Naive thymus-derived CD4-positive, alpha-beta T cell (primary cell): ENCODE measurements at regions of chr7 and their contacts with region 1.

Region 1: DNA sequence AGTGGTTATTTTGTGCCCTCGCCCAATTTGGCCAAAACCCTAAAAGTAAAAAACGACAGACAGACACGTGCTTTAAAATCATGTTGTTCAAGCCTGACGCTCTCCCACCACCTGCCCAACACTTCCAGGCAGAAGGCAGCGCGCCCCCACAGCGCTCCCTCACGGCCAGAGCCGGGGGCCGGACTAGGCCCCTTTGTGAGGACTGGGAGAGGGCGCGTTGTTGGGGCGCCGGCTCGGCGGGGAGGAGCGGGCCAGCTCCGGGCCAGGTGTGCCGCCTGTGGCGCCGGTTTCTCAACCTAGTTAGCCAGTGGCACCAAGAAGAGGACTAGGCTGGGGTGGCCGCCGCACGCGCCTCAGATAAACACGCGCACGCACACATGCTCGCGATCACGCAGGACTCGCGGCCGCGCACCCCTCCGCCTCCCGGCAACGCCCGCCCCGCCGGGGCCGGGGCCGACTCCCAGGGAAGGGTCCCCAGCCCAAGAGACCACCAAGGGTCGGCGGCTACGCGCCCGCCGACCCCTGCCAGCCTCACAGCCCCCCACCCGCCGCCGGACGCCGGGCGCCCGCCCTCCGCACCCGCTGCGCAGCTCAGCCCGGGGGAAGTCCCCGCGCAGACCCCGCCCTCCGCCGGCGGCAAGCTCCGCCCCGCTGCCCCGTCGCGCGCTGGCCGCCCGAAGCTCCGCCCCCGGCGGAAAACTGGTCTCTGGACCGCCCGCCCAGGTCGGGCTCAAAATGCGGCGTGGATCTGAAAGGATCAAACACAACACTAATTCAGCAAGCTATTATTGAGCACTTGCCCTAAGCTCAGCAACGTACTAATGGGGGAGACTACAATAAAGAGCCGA is at the start of gene IMMP2L:
- DNase-seq: peak; percentile 80 to 97 (median 90)
- ATAC-seq: peak; percentile 98
- H3K4me3 ChIP-seq: peak within 1 kb of the TSS; percentile 57
- H3K4me3 Mint-ChIP-seq: peak within 1 kb of the TSS; percentile 86 to 94 (median 92)
- H3K27ac ChIP-seq: peak within 1 kb of the TSS; percentile 94
- H3K27ac Mint-ChIP-seq: peak within 1 kb of the TSS; percentile 81 to 98 (median 95)
- H3K4me1 ChIP-seq: peaks cover 13 to 15% of the 10 kb centered on the region in 2 donors
- H3K4me1 Mint-ChIP-seq: peaks cover 25 to 58% (median 46%) of the 10 kb centered on the region in 7 donors
- H3K27me3 ChIP-seq: no peaks in the 10 kb centered on the region
- H3K27me3 Mint-ChIP-seq: peaks cover 2 to 12% (median 5%) of the 10 kb centered on the region in 5 donors
- total RNA-seq, gene IMMP2L: 9.7 to 20.8 (median 16.5) TPM

Region 2: GRCh38 chr7:110590415-110590814 is 971.7 kb before region 1 on chr7:
- CTCF ChIA-PET with region 1: no interaction called
- POLR2A ChIA-PET with region 1: no interaction called
- intact Hi-C with region 1: loop called in 1 of 2 experiments (anchors 1 kb)
- DNase-seq: peak in 4 of 9 donors; percentile 4 to 11 (median 10)
- ATAC-seq: no peak
- H3K4me3 ChIP-seq: no peak overlapping the region
- H3K4me3 Mint-ChIP-seq: no peak overlapping the region
- H3K27ac ChIP-seq: no peak overlapping the region
- H3K27ac Mint-ChIP-seq: no peak overlapping the region
- H3K4me1 ChIP-seq: no peaks in the 10 kb centered on the region
- H3K4me1 Mint-ChIP-seq: peaks cover 0 to 7% (median 0%) of the 10 kb centered on the region in 7 donors
- H3K27me3 ChIP-seq: no peaks in the 10 kb centered on the region
- H3K27me3 Mint-ChIP-seq: peaks cover 0 to 4% (median 0%) of the 10 kb centered on the region in 5 donors

Region 3: DNA sequence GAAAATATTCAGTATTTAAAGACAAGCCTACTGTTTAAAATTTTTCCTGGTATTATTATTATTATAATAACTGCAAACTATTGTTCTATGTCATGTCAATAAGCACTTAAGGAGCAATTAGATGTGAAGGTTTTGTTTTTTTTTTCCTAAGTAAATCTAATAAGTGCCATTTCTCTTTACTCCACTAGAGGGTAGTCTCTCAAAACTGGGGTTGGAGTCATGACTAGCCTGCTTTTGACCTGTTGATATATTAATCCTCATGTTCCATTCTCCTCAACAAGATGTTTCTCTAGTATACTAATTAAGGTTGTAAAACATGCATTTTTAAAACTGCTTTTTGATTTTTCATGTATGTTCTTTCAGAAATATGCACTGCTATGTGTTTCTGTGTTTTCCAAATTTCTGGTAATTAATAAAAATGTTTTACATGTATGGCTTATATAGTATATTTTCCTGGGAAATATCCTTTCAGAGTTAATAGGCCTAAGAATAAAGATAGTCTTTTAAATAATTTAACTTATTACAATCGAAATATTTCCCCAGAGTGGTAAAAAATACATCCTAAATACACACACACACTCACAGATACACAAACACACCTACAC is 472.2 kb before region 1 on chr7:
- CTCF ChIA-PET with region 1: no interaction called
- POLR2A ChIA-PET with region 1: interaction called, 3 read pairs
- intact Hi-C with region 1: loop called in 1 of 2 experiments (anchors 5 kb)
- DNase-seq: peak in 4 of 9 donors; percentile 43 to 50 (median 47)
- ATAC-seq: peak; percentile 70
- H3K4me3 ChIP-seq: peak overlapping the region; percentile 58
- H3K4me3 Mint-ChIP-seq: peak overlapping the region; percentile 84 to 99 (median 98)
- H3K27ac ChIP-seq: no peak overlapping the region
- H3K27ac Mint-ChIP-seq: peak overlapping the region in 5 of 9 donors; percentile 25 to 97 (median 93)
- H3K4me1 ChIP-seq: peaks cover under 1 to 13% of the 10 kb centered on the region in 2 donors
- H3K4me1 Mint-ChIP-seq: peaks cover 6 to 77% (median 60%) of the 10 kb centered on the region in 7 donors
- H3K27me3 ChIP-seq: no peaks in the 10 kb centered on the region
- H3K27me3 Mint-ChIP-seq: no peaks in the 10 kb centered on the region

Region 4: DNA sequence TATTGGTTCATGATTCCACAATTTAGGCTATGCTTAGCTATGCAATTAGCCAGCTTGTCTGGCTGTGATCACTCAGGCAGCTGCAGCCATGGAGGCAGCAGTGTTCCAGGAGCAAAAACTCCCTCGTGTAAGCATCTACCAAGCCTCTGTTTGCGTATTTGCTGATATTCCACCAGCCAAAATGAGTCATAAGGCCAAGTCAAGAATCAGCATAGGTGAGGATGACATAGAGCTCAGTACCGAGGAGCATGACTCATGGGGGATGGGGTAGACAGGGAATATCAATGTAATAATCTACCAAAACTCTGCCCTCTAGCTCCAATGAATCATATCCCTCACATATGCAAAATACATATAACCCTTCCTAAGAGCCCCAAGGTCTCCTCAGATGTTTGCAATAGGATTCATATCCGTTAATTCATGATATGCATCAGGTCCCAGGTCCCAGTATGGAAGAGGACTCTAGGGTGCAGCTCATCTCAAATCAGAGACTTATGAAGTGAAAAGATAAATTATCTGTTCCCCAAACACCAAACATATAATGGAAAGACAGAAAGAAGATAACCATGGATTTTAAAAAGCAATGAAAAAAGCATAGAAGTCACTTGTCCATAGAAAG is 63.0 kb before region 1 on chr7:
- CTCF ChIA-PET with region 1: no interaction called
- POLR2A ChIA-PET with region 1: no interaction called
- intact Hi-C with region 1: no loop called
- DNase-seq: no peak
- ATAC-seq: no peak
- H3K4me3 ChIP-seq: no peak overlapping the region
- H3K4me3 Mint-ChIP-seq: no peak overlapping the region
- H3K27ac ChIP-seq: no peak overlapping the region
- H3K27ac Mint-ChIP-seq: no peak overlapping the region
- H3K4me1 ChIP-seq: no peaks in the 10 kb centered on the region
- H3K4me1 Mint-ChIP-seq: peaks cover 0 to 22% (median 17%) of the 10 kb centered on the region in 7 donors
- H3K27me3 ChIP-seq: no peaks in the 10 kb centered on the region
- H3K27me3 Mint-ChIP-seq: no peaks in the 10 kb centered on the region

Region 5: GRCh38 chr7:112390167-112390566 is 828.1 kb after region 1 on chr7:
- CTCF ChIA-PET with region 1: no interaction called
- POLR2A ChIA-PET with region 1: no interaction called
- intact Hi-C with region 1: loop called (anchors 1 to 5 kb)
- DNase-seq: no peak
- ATAC-seq: no peak
- H3K4me3 ChIP-seq: no peak overlapping the region
- H3K4me3 Mint-ChIP-seq: peak overlapping the region in 7 of 10 donors; percentile 23 to 87 (median 86)
- H3K27ac ChIP-seq: no peak overlapping the region
- H3K27ac Mint-ChIP-seq: peak overlapping the region in 2 of 9 donors; percentile 57 to 95
- H3K4me1 ChIP-seq: peaks cover 0 to 8% of the 10 kb centered on the region in 2 donors
- H3K4me1 Mint-ChIP-seq: peaks cover 9 to 28% (median 15%) of the 10 kb centered on the region in 7 donors
- H3K27me3 ChIP-seq: no peaks in the 10 kb centered on the region
- H3K27me3 Mint-ChIP-seq: peaks cover 0 to 39% (median 0%) of the 10 kb centered on the region in 5 donors

Region 6: GRCh38 chr7:112789817-112790585 is 1227.9 kb after region 1 on chr7 and contains the start of gene TMEM168:
- CTCF ChIA-PET with region 1: no interaction called
- POLR2A ChIA-PET with region 1: no interaction called
- intact Hi-C with region 1: loop called in 1 of 2 experiments (anchors 5 kb)
- DNase-seq: peak; percentile 75 to 91 (median 83)
- ATAC-seq: peak; percentile 94
- H3K4me3 ChIP-seq: peak within 1 kb of the TSS; percentile 98
- H3K4me3 Mint-ChIP-seq: peak within 1 kb of the TSS; percentile 90 to 97 (median 95)
- H3K27ac ChIP-seq: peak within 1 kb of the TSS; percentile 85
- H3K27ac Mint-ChIP-seq: peak within 1 kb of the TSS; percentile 63 to 93 (median 88)
- H3K4me1 ChIP-seq: peaks cover 13 to 23% of the 10 kb centered on the region in 2 donors
- H3K4me1 Mint-ChIP-seq: peaks cover 27 to 50% (median 36%) of the 10 kb centered on the region in 7 donors
- H3K27me3 ChIP-seq: no peaks in the 10 kb centered on the region
- H3K27me3 Mint-ChIP-seq: no peaks in the 10 kb centered on the region
- total RNA-seq, gene TMEM168: 18.3 to 30.1 (median 20.7) TPM

Region 7: GRCh38 chr7:113118074-113118959 is 1556.2 kb after region 1 on chr7 and contains the start of gene SMIM30:
- CTCF ChIA-PET with region 1: no interaction called
- POLR2A ChIA-PET with region 1: no interaction called
- intact Hi-C with region 1: loop called (anchors 1 to 5 kb)
- DNase-seq: peak; percentile 59 to 90 (median 86)
- ATAC-seq: peak; percentile 100
- H3K4me3 ChIP-seq: peak within 1 kb of the TSS; percentile 75
- H3K4me3 Mint-ChIP-seq: peak within 1 kb of the TSS; percentile 81 to 99 (median 96)
- H3K27ac ChIP-seq: peak within 1 kb of the TSS; percentile 80
- H3K27ac Mint-ChIP-seq: peak within 1 kb of the TSS; percentile 82 to 99 (median 94)
- H3K4me1 ChIP-seq: peaks cover 0 to 6% of the 10 kb centered on the region in 2 donors
- H3K4me1 Mint-ChIP-seq: peaks cover 6 to 32% (median 22%) of the 10 kb centered on the region in 7 donors
- H3K27me3 ChIP-seq: no peaks in the 10 kb centered on the region
- H3K27me3 Mint-ChIP-seq: no peaks in the 10 kb centered on the region
- total RNA-seq, gene SMIM30: 9.3 to 21.0 (median 20.5) TPM